ENCODE measurements at regions of chr16 and their contacts with region 1.

Region 1: DNA sequence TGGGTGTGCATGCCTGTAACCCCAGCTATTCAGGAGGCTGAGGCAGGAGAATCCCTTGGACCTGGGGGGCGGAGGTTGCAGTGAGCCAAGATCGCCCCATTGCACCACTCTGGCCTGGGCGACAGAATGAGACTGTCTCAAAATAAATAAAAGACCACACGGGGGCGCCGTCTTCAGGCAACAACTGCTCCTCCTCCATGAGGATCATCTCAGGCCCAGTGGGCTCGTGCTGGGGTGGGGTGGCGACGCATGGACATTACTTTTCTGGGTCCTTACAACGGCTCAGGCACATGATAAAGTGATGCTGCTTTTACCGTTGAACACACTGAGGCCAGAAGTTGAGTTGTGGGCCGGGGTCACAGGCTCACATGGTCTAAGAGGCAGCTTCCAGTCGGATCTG is 56.2 kb downstream of the PRMT7 start:
- DNase-seq: peak in 1 of 5 donors; percentile 47
- H3K4me3 ChIP-seq: no peak overlapping the region
- H3K27ac ChIP-seq: no peak overlapping the region
- H3K4me1 ChIP-seq: no peaks in the 10 kb centered on the region
- H3K27me3 ChIP-seq: no peaks in the 10 kb centered on the region
- CTCF ChIP-seq: peak in 1 of 3 donors; percentile 30
- EP300 ChIP-seq: no peak
- POLR2A ChIP-seq: no peak

Region 2: GRCh38 chr16:68517606-68518166 is 150.7 kb after region 1 on chr16:
- intact Hi-C with region 1: loop called in 2 of 4 experiments (anchors 10 kb)
- DNase-seq: no peak
- H3K4me3 ChIP-seq: no peak overlapping the region
- H3K27ac ChIP-seq: no peak overlapping the region
- H3K4me1 ChIP-seq: no peaks in the 10 kb centered on the region
- H3K27me3 ChIP-seq: no peaks in the 10 kb centered on the region
- CTCF ChIP-seq: no peak
- EP300 ChIP-seq: no peak
- POLR2A ChIP-seq: no peak

Measured in ovary (tissue), 10 donors.